B cell (primary cell): ENCODE measurements at regions of chr11 and their contacts with region 1.

Region 1: GRCh38 chr11:36289226-36289852 is at the start of gene COMMD9:
- DNase-seq: peak; percentile 92
- ATAC-seq: peak; percentile 94
- H3K4me3 ChIP-seq: peak within 1 kb of the TSS; percentile 66 to 98 (median 89)
- H3K4me3 Mint-ChIP-seq: peak within 1 kb of the TSS; percentile 97
- H3K27ac ChIP-seq: peak within 1 kb of the TSS; percentile 35 to 40
- H3K27ac Mint-ChIP-seq: peak within 1 kb of the TSS; percentile 90
- H3K4me1 ChIP-seq: peaks cover 12 to 16% of the 10 kb centered on the region in 2 donors
- H3K4me1 Mint-ChIP-seq: peaks cover 30% of the 10 kb centered on the region
- H3K27me3 ChIP-seq: no peaks in the 10 kb centered on the region
- H3K27me3 Mint-ChIP-seq: no peaks in the 10 kb centered on the region
- CTCF ChIP-seq: no peak
- total RNA-seq, gene COMMD9: 47.4 and 48.9 TPM in 2 replicates

Region 2: GRCh38 chr11:36354221-36355003 is 65.1 kb after region 1 on chr11:
- CTCF ChIA-PET with region 1: no interaction called
- POLR2A ChIA-PET with region 1: no interaction called
- intact Hi-C with region 1: loop called (anchors 1 kb)
- DNase-seq: no peak
- ATAC-seq: no peak
- H3K4me3 ChIP-seq: no peak overlapping the region
- H3K4me3 Mint-ChIP-seq: peak overlapping the region; percentile 29
- H3K27ac ChIP-seq: no peak overlapping the region
- H3K27ac Mint-ChIP-seq: no peak overlapping the region
- H3K4me1 ChIP-seq: peaks cover 47 to 49% of the 10 kb centered on the region in 2 donors
- H3K4me1 Mint-ChIP-seq: peaks cover 46% of the 10 kb centered on the region
- H3K27me3 ChIP-seq: peaks cover 0 to 7% (median 6%) of the 10 kb centered on the region in 4 experiments
- H3K27me3 Mint-ChIP-seq: no peaks in the 10 kb centered on the region
- CTCF ChIP-seq: no peak

Region 3: GRCh38 chr11:36500315-36500721 is 211.0 kb after region 1 on chr11:
- CTCF ChIA-PET with region 1: interaction called, 14 read pairs
- POLR2A ChIA-PET with region 1: no interaction called
- intact Hi-C with region 1: no loop called
- DNase-seq: no peak
- ATAC-seq: no peak
- H3K4me3 ChIP-seq: no peak overlapping the region
- H3K4me3 Mint-ChIP-seq: no peak overlapping the region
- H3K27ac ChIP-seq: no peak overlapping the region
- H3K27ac Mint-ChIP-seq: no peak overlapping the region
- H3K4me1 ChIP-seq: no peaks in the 10 kb centered on the region
- H3K4me1 Mint-ChIP-seq: peaks cover 10% of the 10 kb centered on the region
- H3K27me3 ChIP-seq: no peaks in the 10 kb centered on the region
- H3K27me3 Mint-ChIP-seq: no peaks in the 10 kb centered on the region
- CTCF ChIP-seq: no peak

Region 4: DNA sequence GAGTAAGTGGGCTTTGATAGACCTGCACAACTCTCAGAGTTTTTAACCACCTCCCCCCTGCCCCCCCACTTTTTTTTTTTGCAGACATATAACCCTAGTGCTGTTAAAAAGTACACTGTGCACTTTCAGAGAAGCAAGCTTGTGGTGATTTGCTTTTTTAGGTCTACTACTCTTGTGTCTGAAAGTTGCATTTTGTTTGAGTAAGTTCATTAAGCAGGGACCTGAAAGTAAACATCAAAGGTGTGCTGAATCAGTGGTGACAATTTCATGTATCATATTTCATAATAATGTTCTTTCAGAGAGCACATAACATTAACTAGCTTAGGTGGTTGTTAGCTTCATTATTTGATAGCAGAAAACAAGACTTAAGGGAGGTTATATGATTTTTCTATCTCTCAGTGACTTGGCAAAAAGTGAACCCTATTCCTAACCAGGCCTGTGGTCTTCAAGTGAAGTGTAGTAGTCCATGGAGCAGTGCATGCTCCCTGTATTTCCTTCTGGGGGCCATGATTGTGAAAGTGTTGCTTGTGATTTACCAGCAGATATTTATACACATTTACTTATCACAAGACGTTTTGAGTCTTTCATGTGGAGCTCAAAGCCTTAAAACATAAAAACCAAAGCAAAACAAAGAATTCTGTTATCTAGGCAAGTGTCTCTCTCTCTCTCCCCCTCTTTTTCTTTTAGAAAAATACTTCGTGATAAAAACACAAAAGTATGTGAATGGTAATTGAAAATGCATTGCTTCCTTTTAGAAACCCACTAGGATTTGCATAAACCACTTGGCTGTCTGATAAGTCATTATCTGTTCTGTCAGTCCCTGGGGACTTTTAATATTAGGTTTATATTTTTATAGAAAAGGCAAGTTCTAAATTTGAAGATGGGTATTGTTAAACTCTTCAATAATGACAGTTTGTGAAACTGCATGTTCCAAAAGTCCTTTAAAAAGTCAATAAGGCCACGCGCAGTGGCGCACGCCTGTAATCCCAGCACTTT is 316.2 kb after region 1 on chr11:
- CTCF ChIA-PET with region 1: no interaction called
- POLR2A ChIA-PET with region 1: no interaction called
- intact Hi-C with region 1: no loop called
- DNase-seq: no peak
- ATAC-seq: no peak
- H3K4me3 ChIP-seq: no peak overlapping the region
- H3K4me3 Mint-ChIP-seq: no peak overlapping the region
- H3K27ac ChIP-seq: no peak overlapping the region
- H3K27ac Mint-ChIP-seq: no peak overlapping the region
- H3K4me1 ChIP-seq: no peaks in the 10 kb centered on the region
- H3K4me1 Mint-ChIP-seq: no peaks in the 10 kb centered on the region
- H3K27me3 ChIP-seq: peaks cover 1 to 37% (median 6%) of the 10 kb centered on the region in 4 experiments
- H3K27me3 Mint-ChIP-seq: peaks cover 62% of the 10 kb centered on the region
- CTCF ChIP-seq: no peak

Region 5: DNA sequence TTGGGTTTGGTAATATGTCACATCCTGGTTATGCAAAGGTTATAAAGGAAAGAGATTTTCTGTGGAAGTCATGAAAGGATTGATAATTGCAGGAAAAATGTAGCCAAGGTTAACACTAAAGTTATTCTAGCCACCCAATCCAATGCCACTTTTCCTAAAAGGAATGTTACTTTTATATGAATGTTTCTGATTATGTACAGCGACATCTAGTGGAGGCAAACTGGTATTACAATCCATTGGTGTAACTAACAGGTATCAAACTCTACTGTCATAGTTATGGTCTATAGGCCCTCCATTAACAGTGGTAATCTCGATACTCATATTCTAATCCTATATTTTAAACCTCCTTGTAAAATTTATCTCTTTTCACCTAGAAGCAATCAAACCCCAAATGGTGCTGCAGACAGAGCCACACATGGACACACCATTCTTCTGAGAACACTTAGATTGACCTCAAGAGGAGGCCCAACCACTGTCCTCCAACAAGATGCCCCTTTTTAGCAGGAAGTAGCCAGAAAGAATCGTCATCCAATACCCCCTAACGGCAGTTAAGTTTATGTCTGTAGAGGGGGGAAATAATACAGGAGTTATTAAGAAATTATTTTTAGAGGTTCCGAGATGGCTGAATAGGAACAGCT is 383.6 kb after region 1 on chr11:
- CTCF ChIA-PET with region 1: interaction called, 16 read pairs
- POLR2A ChIA-PET with region 1: no interaction called
- intact Hi-C with region 1: no loop called
- DNase-seq: peak; percentile 57
- ATAC-seq: no peak
- H3K4me3 ChIP-seq: no peak overlapping the region
- H3K4me3 Mint-ChIP-seq: no peak overlapping the region
- H3K27ac ChIP-seq: no peak overlapping the region
- H3K27ac Mint-ChIP-seq: no peak overlapping the region
- H3K4me1 ChIP-seq: no peaks in the 10 kb centered on the region
- H3K4me1 Mint-ChIP-seq: no peaks in the 10 kb centered on the region
- H3K27me3 ChIP-seq: no peaks in the 10 kb centered on the region
- H3K27me3 Mint-ChIP-seq: peaks cover 4% of the 10 kb centered on the region
- CTCF ChIP-seq: peak; percentile 97